Left ventricle myocardium inferior (tissue), 1 donor: ENCODE measurements at regions of chr9 and their contacts with region 1.

Region 1: DNA sequence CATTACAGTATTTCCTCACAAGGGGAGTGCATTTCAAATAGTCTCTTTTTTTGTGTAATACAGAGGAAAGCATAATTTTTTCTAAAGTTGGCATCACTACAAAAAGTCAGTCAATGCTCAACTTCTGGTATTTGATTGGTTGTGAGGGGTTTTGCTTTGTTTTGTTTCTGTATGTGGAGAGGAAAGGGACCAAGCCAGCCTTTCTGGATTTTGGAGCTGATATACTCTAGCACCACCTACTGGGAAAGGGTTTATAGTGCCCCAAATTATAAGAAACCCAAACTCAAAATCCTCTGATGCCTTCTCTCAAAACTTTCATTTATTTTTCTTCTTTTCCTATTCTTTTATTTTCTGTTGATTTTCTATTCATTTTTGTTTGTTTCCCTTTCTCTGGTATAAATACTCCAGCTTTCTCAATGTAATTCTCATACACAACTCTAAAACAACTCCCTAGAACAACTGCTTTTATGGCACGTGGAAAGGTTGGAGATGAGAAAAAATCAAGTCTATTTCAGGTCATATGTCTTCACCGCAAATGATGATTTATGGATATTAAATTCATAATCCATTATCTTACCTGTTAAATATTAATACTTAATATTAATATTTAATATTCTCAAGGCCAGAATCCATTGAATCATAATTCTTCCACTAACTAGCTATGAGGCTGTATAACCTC is 69.5 kb upstream of the ANXA1 start:
- DNase-seq: no peak
- H3K4me3 ChIP-seq: no peak overlapping the region
- H3K27ac ChIP-seq: no peak overlapping the region
- H3K4me1 ChIP-seq: no peaks in the 10 kb centered on the region
- H3K27me3 ChIP-seq: peaks cover 21% of the 10 kb centered on the region
- CTCF ChIP-seq: peak; percentile 81

Region 2: DNA sequence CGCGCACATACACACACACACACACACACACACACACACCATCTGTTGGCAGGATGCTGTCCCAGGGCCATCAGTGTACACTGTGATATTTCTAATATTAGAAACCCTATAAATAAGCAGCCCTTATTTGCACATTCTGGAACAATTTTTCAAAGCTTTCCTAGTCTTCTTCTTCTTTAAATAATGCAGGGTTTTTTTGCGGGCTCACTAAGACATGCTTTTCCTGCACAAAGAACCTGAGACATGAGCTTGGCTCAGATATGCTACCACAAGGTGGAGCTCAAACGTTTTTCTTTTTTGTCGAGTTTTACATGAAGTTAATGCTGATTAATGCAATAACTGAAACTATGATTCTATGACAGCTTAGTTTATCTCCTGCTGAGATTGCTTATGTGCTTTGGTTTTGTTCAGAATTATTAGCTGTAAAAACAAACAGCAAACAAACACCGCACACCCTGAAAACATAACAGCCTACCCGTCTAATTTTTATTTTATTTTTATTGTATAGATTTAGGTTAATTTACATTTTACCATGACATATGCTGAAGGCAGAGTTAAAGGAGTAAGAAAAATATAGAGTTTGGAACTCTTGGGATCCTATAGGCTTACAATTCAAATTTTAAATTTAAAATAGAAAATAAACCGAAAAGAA is 225.0 kb before region 1 on chr9:
- intact Hi-C with region 1: loop called (anchors 10 kb)
- DNase-seq: no peak
- H3K4me3 ChIP-seq: no peak overlapping the region
- H3K27ac ChIP-seq: peak overlapping the region; percentile 25
- H3K4me1 ChIP-seq: peaks cover 21% of the 10 kb centered on the region
- H3K27me3 ChIP-seq: no peaks in the 10 kb centered on the region
- CTCF ChIP-seq: peak; percentile 74